Heart left ventricle (tissue), 16 donors: ENCODE measurements at regions of chr5 and their contacts with region 1.

Region 1: DNA sequence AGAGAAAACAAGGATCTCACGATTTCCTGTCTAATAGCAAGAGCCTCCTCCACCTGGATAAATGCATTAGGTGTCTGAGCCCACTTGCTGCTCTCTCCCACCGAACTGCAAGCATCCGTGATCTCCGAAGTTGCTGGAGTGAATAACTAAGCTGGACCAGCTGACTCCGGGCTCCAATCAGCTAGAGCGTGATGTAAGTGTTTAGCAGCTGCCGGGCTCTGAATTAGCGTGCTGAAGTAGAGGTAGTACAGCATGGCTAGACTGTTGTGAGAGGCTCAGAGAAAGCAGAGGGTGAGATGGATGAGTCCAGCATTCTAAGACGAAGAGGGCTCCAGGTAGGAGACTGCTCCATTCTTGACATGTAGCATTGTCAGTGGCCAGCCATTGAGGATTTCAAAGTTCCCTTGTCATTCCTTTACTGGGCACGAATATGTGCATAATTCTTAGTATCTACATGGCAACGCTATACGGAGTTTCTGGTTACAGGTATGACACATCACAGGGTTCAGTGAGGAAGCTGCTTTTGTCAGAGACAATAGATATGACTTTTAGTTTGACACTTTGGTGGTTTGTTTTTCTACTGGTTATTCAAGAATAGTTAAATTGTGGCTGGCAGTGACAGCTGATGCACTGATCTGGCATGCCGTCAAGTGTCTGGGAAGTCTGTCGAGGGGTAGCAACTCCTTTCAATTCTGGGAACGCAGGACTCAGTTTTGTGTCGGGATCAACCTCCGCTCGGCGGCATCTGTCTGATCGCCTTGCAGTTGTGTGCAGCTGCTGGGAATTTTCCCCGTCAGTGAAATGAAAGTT is 232.6 kb downstream of the MAST4 start:
- DNase-seq: peak; percentile 71 to 85 (median 76)
- ATAC-seq: peak; percentile 89 to 95 (median 94)
- H3K4me3 ChIP-seq: peak overlapping the region; percentile 22 to 64 (median 50)
- H3K27ac ChIP-seq: peak overlapping the region; percentile 26 to 83 (median 72)
- H3K4me1 ChIP-seq: peaks cover 0 to 37% (median 13%) of the 10 kb centered on the region in 12 donors
- H3K27me3 ChIP-seq: no peaks in the 10 kb centered on the region
- CTCF ChIP-seq: no peak
- POLR2A ChIP-seq: peak in 1 of 2 donors; percentile 51

Region 2: DNA sequence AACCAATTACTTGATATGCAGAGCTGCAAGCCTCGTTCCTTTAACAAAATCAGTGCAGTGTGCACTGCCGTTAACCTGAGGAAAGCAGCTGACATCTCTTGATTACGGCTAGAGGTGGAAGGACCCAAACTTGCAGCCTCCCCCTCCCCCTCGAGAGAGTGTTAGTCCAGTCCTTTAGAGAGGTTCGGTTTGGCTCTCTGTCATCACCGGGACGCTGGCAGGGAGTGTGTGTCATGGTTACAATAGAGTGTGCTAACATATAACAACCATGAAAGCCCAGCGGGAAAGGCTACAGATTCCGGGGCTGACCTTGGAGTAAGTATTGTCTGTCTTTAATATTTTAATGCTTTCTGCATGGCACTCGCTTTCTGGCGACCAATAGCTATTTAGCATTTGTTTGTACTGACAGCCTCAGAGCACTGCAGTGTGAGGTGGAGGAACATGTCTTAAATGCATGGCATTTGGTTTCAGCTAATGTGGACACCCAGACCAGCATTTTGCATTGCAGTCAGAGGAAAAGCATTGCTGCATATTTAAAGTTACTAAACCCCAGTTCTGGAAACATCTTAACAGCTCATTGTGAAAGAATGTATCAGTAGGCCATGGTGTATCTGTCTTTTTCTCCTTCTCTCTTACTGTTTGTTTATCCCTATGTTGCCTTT is 130.4 kb after region 1 on chr5:
- intact Hi-C with region 1: loop called in 2 of 10 experiments (anchors 10 kb)
- DNase-seq: peak in 4 of 5 donors; percentile 31 to 64 (median 38)
- ATAC-seq: peak; percentile 63 to 75 (median 67)
- H3K4me3 ChIP-seq: peak overlapping the region; percentile 4 to 65 (median 48)
- H3K27ac ChIP-seq: peak overlapping the region; percentile 51 to 73 (median 66)
- H3K4me1 ChIP-seq: peaks cover 0 to 50% (median 14%) of the 10 kb centered on the region in 12 donors
- H3K27me3 ChIP-seq: no peaks in the 10 kb centered on the region
- CTCF ChIP-seq: no peak
- POLR2A ChIP-seq: no peak

Region 3: DNA sequence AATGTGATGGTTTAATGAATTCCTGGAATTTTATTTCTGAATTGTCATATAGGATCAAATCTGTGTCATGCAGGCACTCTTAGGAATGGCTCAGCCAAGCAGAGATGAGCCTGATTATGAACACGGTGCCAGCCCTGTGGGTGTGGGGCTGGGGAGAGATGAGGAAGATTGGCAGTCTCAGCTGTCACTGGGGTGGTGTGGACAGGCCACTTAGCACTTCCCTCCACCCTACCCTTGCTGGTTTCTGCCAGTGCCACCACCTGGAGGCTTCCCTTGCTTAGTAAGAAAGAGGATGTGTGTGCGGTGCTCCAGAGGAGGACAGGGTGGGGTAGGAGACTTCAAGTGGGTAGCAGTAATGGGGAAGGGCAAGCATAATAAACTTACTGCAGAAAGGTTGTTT is 141.2 kb after region 1 on chr5:
- intact Hi-C with region 1: loop called in 3 of 10 experiments (anchors 5 to 10 kb)
- DNase-seq: peak in 1 of 5 donors; percentile 36
- ATAC-seq: peak in 3 of 4 donors; percentile 43 to 63 (median 52)
- H3K4me3 ChIP-seq: no peak overlapping the region
- H3K27ac ChIP-seq: no peak overlapping the region
- H3K4me1 ChIP-seq: peaks cover 0 to 32% (median 6%) of the 10 kb centered on the region in 12 donors
- H3K27me3 ChIP-seq: no peaks in the 10 kb centered on the region
- CTCF ChIP-seq: no peak
- POLR2A ChIP-seq: no peak